ENCODE measurements at regions of chr10 and their contacts with region 1.

Region 1: DNA sequence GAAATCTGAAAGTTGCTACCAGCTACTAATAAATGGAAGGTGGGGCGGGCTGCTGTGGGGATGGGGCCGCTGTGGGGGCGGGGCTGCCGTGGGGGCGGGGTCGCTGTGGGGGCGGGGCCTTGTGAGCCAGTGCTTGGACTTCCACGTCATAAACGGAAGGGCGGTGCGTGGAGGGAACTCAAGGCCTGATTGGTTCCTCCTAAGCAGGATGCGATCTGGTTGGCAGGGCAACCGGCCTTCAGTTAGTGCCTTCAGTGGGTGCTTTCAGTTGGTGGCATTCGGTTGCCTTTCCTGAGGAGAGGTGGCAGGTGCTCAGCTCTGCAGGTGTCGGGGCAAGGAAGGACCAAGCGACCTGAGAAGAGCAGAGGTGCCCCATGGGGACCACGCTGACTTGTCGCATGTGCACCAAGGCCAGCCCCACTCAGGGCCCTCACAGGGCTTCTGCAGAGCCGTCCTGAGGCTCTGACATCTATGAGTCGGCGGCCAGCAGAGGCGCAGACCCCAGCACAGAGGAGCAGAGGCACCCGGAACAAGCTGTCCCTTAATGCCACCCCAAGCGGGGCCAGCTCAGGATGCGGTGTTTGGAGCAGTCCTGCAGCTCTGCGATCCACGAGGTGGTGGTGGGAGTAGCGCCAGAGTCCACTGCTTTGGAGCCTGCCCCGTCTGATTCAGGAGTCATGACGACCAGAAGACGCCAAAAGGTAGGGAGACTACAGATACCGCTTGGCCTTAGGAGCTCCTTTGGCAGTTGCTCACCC is 54.4 kb upstream of the PDSS1 start:
- DNase-seq: peak in 1 of 35 experiments; percentile 47
- ATAC-seq: peak in 2 of 4 experiments; percentile 44 to 61
- H3K4me3 ChIP-seq: no peak overlapping the region
- H3K4me3 Mint-ChIP-seq: no peak overlapping the region
- H3K27ac ChIP-seq: no peak overlapping the region
- H3K27ac Mint-ChIP-seq: no peak overlapping the region
- H3K4me1 ChIP-seq: no peaks in the 10 kb centered on the region
- H3K4me1 Mint-ChIP-seq: peaks cover 6 to 7% (median 6%) of the 10 kb centered on the region in 3 donors
- H3K27me3 ChIP-seq: peaks cover 0 to 2% of the 10 kb centered on the region in 2 experiments
- H3K27me3 Mint-ChIP-seq: no peaks in the 10 kb centered on the region

Region 2: DNA sequence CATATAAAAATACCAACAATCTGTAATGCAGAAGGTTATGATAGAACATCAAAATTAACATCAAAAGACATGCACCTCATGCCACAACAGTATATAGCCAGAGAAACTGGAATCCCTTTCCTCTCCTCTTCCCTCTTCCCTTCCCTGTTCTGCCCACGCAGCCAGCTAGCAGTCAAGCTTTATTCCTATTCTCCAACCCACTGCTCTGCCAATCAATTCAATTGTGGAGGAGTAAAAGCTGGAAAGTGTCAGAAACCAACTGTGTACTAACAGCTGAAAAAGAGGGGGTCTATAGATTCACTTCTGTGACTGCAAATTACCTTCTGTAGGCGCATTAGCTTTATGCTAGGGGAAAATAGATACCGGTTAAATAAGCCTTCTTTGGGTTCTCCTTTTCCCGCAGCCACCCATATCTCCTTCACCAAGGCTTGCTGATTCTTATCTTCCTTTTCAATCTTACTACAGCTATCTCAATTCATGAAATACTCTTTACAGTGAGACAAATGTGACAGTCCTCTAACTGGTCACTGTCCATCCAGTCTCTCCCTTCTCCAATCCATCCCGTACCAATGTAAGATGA is 201.4 kb after region 1 on chr10:
- CTCF ChIA-PET with region 1: interaction called in 1 of 2 experiments, 11 read pairs
- POLR2A ChIA-PET with region 1: no interaction called
- DNase-seq: no peak
- ATAC-seq: no peak
- H3K4me3 ChIP-seq: no peak overlapping the region
- H3K4me3 Mint-ChIP-seq: peak overlapping the region in 1 of 3 donors; percentile 16
- H3K27ac ChIP-seq: no peak overlapping the region
- H3K27ac Mint-ChIP-seq: peak overlapping the region; percentile 1 to 71
- H3K4me1 ChIP-seq: peaks cover 4 to 40% of the 10 kb centered on the region in 2 experiments
- H3K4me1 Mint-ChIP-seq: peaks cover 76 to 79% (median 76%) of the 10 kb centered on the region in 3 donors
- H3K27me3 ChIP-seq: no peaks in the 10 kb centered on the region
- H3K27me3 Mint-ChIP-seq: no peaks in the 10 kb centered on the region